PC-3 (cell line): ENCODE measurements at regions of chr7 and their contacts with region 1.

Region 1: GRCh38 chr7:7761340-7761980 is 43.1 kb upstream of the RPA3 start:
- DNase-seq: peak; percentile 73
- ATAC-seq: peak; percentile 14
- H3K4me3 ChIP-seq: peak overlapping the region; percentile 68
- H3K27ac ChIP-seq: peak overlapping the region; percentile 86
- H3K4me1 ChIP-seq: peaks cover 35% of the 10 kb centered on the region
- H3K27me3 ChIP-seq: no peaks in the 10 kb centered on the region
- CTCF ChIP-seq: peak; percentile 67; the same call in 1 of the 2 replicates

Region 2: DNA sequence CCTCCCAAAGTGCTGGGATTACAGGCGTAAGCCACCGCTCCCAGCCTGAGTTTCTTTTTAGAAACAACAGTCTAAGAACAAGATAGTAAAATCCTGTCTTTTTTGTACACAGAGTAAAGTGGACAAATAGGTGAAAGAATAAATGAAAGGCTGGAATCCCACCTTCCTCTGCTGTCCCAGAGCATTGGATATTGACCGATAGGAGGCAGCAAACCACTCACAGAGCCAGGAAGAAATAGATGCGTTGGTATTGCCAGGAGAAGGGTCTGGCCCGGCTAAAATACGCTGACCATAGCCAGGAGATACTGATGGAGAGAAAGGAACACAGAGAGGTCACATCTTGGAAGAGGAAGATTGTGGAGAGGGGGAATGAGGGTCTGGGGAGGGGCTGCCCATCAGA is 1043.3 kb before region 1 on chr7:
- CTCF ChIA-PET with region 1: no interaction called
- POLR2A ChIA-PET with region 1: no interaction called
- intact Hi-C with region 1: no loop called
- DNase-seq: no peak
- ATAC-seq: no peak
- H3K4me3 ChIP-seq: no peak overlapping the region
- H3K27ac ChIP-seq: no peak overlapping the region
- H3K4me1 ChIP-seq: no peaks in the 10 kb centered on the region
- H3K27me3 ChIP-seq: no peaks in the 10 kb centered on the region
- CTCF ChIP-seq: no peak

Region 3: DNA sequence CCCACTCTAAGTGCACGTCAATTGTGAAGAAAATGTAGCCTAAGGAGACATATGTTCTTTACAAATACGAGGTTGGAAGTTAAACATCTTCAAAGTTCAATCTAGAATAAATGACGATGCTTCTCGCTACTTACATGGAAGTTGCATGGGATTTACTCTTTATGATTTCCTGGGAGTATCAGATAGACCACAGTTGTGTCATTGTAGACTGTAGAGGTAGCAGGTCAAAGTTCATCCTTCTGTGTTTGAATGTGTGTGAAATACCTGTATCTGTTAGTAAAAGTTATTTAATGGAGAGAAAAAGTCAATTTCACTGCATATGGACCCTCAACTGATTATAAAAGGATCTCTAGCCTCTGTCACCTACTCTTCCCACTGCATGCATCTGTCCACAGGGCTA is 466.5 kb before region 1 on chr7:
- CTCF ChIA-PET with region 1: no interaction called
- POLR2A ChIA-PET with region 1: no interaction called
- intact Hi-C with region 1: no loop called
- DNase-seq: no peak
- ATAC-seq: no peak
- H3K4me3 ChIP-seq: no peak overlapping the region
- H3K27ac ChIP-seq: no peak overlapping the region
- H3K4me1 ChIP-seq: no peaks in the 10 kb centered on the region
- H3K27me3 ChIP-seq: no peaks in the 10 kb centered on the region
- CTCF ChIP-seq: no peak

Region 4: DNA sequence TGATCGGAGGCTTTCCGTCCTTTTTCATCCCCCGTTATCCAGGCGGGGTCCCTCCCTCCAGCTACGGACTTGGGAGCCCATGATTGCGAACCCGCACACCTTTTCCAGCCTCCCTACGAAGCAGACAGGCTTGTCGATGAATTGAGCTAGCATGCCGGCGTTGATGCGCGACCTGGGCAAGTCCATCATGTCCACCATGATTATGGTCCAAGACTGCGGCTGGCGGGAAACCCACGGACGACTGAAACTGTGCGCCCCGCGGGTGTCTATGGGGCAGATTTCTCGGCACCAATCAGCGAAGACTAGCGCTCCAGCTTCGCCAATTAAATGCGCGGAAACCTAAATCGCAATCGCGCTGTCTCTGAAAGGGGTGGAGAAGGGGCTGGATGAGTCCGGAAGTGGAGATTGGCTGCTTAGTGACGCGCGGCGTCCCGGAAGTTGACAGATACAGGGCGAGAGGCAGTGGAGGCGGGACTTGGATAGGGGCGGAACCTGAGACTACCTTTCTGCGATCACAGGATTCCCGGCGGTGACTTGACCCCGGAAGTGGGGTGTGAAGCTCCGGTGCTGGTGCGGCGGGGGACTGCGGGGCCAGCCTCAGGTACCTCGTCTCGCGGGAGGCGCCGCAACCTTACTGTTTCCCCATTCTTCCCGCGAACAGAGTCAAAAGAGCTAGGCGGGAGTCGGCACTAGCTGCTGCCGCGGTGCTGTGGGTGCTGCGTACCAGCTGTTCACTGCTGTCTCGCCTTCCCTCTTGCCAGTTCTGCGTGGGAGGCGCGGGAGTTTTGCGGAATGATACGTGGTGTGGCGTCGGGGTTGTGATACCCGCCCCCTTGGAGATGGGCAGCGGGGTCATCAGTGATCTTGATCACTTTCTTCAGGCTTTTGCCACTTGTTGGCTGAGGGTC is 121.0 kb before region 1 on chr7 and contains the start of gene UMAD1:
- CTCF ChIA-PET with region 1: no interaction called
- POLR2A ChIA-PET with region 1: interaction called, 6 read pairs
- intact Hi-C with region 1: loop called (anchors 1 kb)
- DNase-seq: peak; percentile 99
- ATAC-seq: peak; percentile 96
- H3K4me3 ChIP-seq: peak within 1 kb of the TSS; percentile 83
- H3K27ac ChIP-seq: peak within 1 kb of the TSS; percentile 50
- H3K4me1 ChIP-seq: peaks cover 20% of the 10 kb centered on the region; the same call in 1 of the 2 replicates
- H3K27me3 ChIP-seq: no peaks in the 10 kb centered on the region
- CTCF ChIP-seq: no peak
- total RNA-seq, gene UMAD1: 6.0 and 8.9 TPM in 2 replicates

Region 5: DNA sequence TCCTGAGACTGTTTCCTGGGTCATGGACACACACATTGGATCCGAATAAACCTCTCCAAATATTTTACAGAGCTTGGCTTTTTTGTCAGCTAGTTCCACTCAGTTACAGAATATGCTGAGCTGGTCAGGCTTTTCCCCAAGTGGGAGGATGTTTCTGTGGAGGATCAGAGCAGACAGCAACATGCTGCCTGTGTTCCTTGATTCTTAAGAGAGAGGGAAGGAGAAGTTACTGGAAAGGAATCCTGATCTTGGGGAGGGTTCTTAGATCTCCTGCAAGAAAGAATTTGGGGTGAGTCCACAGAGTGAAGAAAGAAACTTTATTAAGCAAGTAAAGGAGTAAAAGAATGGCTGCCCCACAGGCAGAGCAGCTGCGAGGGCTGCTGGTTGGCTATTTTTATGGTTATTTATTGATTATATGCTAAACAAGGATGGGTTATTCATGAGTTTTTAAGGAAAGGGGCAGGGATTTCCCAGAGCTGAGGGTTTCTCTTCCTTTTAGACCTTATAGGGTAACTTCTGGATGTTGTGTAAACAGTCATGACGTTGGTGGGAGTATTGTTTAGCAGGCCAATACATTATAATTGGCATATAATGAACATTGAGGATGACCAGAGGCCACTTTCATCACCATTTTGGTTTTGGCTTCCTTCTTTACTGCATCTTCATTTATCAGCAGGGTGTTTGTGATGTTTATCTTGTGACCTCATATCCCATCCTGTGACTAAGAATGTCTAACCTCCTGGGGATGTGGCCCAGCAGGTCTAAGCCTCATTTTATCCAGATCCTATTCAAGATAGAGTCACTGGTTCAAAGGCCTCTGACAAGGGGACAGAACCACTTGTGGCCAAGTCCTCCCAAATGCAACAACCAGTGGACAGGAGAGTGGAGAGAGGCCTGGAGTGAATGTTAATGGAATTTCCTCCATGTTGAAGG is 34.0 kb after region 1 on chr7:
- CTCF ChIA-PET with region 1: no interaction called
- POLR2A ChIA-PET with region 1: interaction called, 11 read pairs
- intact Hi-C with region 1: no loop called
- DNase-seq: peak; percentile 94
- ATAC-seq: peak; percentile 90
- H3K4me3 ChIP-seq: no peak overlapping the region
- H3K27ac ChIP-seq: peak overlapping the region; percentile 94
- H3K4me1 ChIP-seq: peaks cover 40% of the 10 kb centered on the region
- H3K27me3 ChIP-seq: no peaks in the 10 kb centered on the region
- CTCF ChIP-seq: no peak

Region 6: GRCh38 chr7:7819442-7820247 is 58.2 kb after region 1 on chr7:
- CTCF ChIA-PET with region 1: no interaction called
- POLR2A ChIA-PET with region 1: no interaction called
- intact Hi-C with region 1: no loop called
- DNase-seq: no peak
- ATAC-seq: no peak
- H3K4me3 ChIP-seq: no peak overlapping the region
- H3K27ac ChIP-seq: no peak overlapping the region
- H3K4me1 ChIP-seq: peaks cover 12% of the 10 kb centered on the region
- H3K27me3 ChIP-seq: no peaks in the 10 kb centered on the region
- CTCF ChIP-seq: no peak

Region 7: GRCh38 chr7:7968543-7969305 is 207.3 kb after region 1 on chr7 and contains the start of gene GLCCI1:
- CTCF ChIA-PET with region 1: interaction called, 3 read pairs
- POLR2A ChIA-PET with region 1: interaction called, 11 read pairs
- intact Hi-C with region 1: loop called (anchors 1 kb)
- DNase-seq: peak; percentile 96
- ATAC-seq: peak; percentile 87
- H3K4me3 ChIP-seq: peak within 1 kb of the TSS; percentile 88
- H3K27ac ChIP-seq: peak within 1 kb of the TSS; percentile 70
- H3K4me1 ChIP-seq: peaks cover 35% of the 10 kb centered on the region
- H3K27me3 ChIP-seq: no peaks in the 10 kb centered on the region
- CTCF ChIP-seq: no peak
- total RNA-seq, gene GLCCI1: 7.8 and 8.5 TPM in 2 replicates

Region 8: GRCh38 chr7:8115547-8116402 is 354.3 kb after region 1 on chr7:
- CTCF ChIA-PET with region 1: no interaction called
- POLR2A ChIA-PET with region 1: no interaction called
- intact Hi-C with region 1: no loop called
- DNase-seq: no peak
- ATAC-seq: no peak
- H3K4me3 ChIP-seq: no peak overlapping the region
- H3K27ac ChIP-seq: no peak overlapping the region
- H3K4me1 ChIP-seq: no peaks in the 10 kb centered on the region
- H3K27me3 ChIP-seq: no peaks in the 10 kb centered on the region
- CTCF ChIP-seq: no peak

Region 9: GRCh38 chr7:8190119-8190895 is 428.8 kb after region 1 on chr7:
- CTCF ChIA-PET with region 1: no interaction called
- POLR2A ChIA-PET with region 1: no interaction called
- intact Hi-C with region 1: loop called (anchors 1 kb)
- DNase-seq: peak; percentile 66
- ATAC-seq: peak; percentile 84
- H3K4me3 ChIP-seq: no peak overlapping the region
- H3K27ac ChIP-seq: no peak overlapping the region
- H3K4me1 ChIP-seq: no peaks in the 10 kb centered on the region
- H3K27me3 ChIP-seq: no peaks in the 10 kb centered on the region
- CTCF ChIP-seq: peak; percentile 83